ENCODE measurements at regions of chr5 and their contacts with region 1.

Region 1: DNA sequence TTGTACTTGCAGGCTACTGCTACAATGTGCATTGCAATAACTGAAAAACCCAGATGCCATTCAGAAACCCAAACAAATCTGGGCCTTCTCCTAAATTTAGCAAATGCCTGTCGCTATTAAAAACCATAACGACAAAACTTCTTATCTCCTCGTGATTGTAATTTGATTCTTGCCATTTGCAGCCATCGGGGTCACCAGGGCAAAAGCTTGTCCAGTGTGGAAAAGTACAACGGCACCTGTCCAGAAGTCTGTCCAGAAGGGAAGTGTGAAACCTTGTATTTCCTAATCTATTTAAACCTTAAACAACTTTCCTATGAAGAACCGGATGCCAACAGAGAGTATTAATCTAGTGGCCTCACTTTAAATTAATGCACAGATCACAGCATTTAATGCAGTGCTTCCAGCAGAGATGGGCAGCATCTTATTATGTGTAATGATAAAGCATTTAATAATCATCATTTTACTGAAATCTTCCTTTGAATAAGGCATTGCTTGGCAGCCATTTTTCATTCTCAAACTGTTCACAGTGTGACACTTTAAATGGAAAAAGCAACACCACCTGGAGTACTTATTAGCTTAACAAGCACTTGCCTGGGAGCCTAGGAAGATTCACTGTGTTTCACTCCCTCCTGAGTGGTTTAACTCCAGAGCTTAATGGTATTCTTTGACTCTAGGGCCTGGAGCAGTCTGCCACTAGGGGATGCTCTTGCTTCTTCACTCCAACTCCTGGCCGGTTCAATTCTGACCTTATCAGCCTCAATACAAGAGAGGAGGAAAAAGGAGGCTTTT is 4.9 kb upstream of the C7 start:
- DNase-seq: peak; percentile 67 to 86 (median 71)
- H3K4me3 ChIP-seq: no peak overlapping the region
- H3K27ac ChIP-seq: peak overlapping the region in 1 of 2 donors; percentile 71
- H3K4me1 ChIP-seq: peaks cover 7% of the 10 kb centered on the region
- H3K27me3 ChIP-seq: no peaks in the 10 kb centered on the region
- CTCF ChIP-seq: peak; percentile 66 to 98 (median 94)
- EP300 ChIP-seq: no peak
- POLR2A ChIP-seq: no peak

Region 2: DNA sequence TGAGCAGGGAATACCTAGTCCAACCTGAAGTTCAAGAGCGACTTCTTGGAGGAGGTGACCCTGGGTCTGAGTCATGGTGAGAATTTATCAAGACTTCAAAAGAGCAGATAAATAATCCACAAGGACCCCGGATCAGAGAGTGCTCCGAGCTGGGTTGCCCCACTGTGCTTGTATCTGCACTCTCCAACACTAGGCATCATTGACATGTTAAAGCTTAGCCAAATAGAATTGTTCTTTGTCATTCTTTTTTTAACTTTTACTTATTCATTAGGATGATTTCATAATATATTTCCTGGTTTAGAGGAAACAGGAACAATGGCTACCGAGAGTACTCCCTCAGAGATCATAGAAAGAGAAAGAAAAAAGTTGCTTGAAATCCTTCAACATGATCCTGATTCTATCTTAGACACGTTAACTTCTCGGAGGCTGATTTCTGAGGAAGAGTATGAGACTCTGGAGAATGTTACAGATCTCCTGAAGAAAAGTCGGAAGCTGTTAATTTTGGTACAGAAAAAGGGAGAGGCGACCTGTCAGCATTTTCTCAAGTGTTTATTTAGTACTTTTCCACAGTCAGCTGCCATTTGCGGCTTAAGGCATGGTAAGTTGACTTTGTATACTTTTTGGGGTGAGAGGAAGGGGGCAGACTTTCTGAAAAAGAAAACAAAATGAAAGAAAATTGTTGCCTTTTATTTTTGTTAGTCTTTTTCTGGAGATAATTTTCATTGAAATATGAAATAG is 63.2 kb before region 1 on chr5 and contains the start of gene CARD6:
- intact Hi-C with region 1: no loop called
- DNase-seq: no peak
- H3K4me3 ChIP-seq: peak within 1 kb of the TSS; percentile 31
- H3K27ac ChIP-seq: no peak within 1 kb of the TSS
- H3K4me1 ChIP-seq: peaks cover 5% of the 10 kb centered on the region
- H3K27me3 ChIP-seq: no peaks in the 10 kb centered on the region
- CTCF ChIP-seq: no peak
- EP300 ChIP-seq: no peak
- POLR2A ChIP-seq: no peak
- total RNA-seq, gene CARD6: 2.0 to 6.3 (median 5.2) TPM

Region 3: GRCh38 chr5:41270423-41271251 is 366.2 kb after region 1 on chr5:
- intact Hi-C with region 1: loop called in 1 of 4 experiments (anchors 5 kb)
- DNase-seq: peak; percentile 46 to 76 (median 50)
- H3K4me3 ChIP-seq: no peak overlapping the region
- H3K27ac ChIP-seq: no peak overlapping the region
- H3K4me1 ChIP-seq: peaks cover 2% of the 10 kb centered on the region
- H3K27me3 ChIP-seq: no peaks in the 10 kb centered on the region
- CTCF ChIP-seq: peak; percentile 36 to 88 (median 72)
- EP300 ChIP-seq: no peak
- POLR2A ChIP-seq: no peak

Region 4: DNA sequence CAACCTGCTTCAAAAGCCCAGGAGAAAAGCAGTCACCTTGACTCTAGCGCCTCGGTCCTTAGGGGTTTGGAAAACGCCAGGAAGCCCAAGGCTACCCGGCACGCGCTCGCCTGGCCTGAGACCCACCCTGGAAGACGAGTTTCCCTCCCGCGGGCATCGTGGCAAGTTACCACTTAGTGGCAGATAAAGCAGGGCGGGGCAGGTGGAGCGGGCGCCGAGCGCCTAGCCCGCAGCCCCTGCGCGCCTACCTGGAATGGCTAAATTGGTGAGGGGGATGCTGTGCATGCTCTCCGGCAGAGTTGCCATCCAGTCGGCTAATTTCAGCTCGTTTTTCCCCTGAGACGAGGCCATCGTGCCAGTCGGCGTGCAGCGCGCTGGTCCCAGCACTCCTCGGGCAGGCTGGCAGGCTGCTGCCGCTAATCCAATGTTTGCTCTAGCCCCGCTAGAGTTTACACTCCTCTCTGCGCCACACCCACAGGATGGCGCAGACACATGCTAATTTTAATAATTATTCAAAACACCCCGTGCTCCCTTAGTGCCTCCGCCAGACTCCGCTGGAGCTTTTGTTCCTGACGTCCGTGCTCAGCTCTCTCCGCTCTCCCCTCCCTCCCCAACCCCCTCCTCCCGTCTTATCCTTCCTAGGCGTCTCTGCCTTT is 605.9 kb after region 1 on chr5 and contains the start of gene PLCXD3:
- intact Hi-C with region 1: loop called in 1 of 4 experiments (anchors 10 kb)
- DNase-seq: peak; percentile 54 to 70 (median 66)
- H3K4me3 ChIP-seq: peak within 1 kb of the TSS; percentile 50
- H3K27ac ChIP-seq: peak within 1 kb of the TSS; percentile 56 to 73
- H3K4me1 ChIP-seq: no peaks in the 10 kb centered on the region
- H3K27me3 ChIP-seq: no peaks in the 10 kb centered on the region
- CTCF ChIP-seq: no peak
- EP300 ChIP-seq: no peak
- POLR2A ChIP-seq: no peak
- total RNA-seq, gene PLCXD3: 19.5 to 69.5 (median 36.8) TPM

Region 5: DNA sequence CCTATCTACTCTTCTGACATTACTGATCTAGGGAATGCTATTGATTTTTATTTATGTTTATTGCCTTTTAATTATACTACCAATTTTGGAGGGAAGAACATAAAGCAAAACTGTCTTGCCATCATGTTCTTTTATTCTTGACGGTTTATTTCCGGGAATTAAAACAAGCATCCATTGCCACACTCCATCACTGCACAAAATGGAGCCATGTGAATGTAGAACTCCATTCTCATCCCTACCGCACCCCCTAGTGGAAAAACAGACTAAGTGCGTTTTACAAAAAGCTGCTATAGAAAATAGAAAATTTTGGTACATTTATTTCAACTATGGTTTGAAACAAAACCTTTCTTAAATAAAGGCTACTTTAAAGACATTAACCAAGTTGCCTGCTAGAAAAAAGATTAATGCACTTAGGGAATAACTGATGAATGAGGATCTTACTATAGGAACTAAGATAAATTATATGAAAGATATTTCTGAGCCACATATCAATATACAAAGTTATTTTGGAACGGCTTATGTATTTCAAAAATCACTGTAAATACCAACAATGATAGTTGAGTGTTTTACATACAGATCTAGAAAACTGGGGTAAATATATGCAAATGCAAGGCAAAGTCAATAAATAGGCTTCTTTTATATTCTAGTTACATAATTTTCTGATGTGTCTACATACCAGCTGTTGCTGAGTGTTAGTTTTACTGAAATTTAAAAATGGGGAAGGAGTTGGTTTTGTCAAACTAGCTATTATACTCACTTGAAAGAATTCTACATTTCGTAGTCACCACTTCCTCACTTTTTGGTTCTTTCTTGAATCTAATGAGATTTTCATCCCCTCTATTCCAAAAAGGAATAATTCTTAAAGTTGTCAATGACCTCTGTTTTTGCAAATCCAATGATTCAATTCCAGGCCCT is 939.3 kb after region 1 on chr5:
- intact Hi-C with region 1: loop called in 2 of 4 experiments (anchors 10 kb)
- DNase-seq: peak in 1 of 5 donors; percentile 45
- H3K4me3 ChIP-seq: no peak overlapping the region
- H3K27ac ChIP-seq: no peak overlapping the region
- H3K4me1 ChIP-seq: no peaks in the 10 kb centered on the region
- H3K27me3 ChIP-seq: no peaks in the 10 kb centered on the region
- CTCF ChIP-seq: peak; percentile 56 to 81 (median 80)
- EP300 ChIP-seq: no peak
- POLR2A ChIP-seq: no peak

Measured in ovary (tissue), 10 donors.